CD8-positive, alpha-beta memory T cell (primary cell): ENCODE measurements at regions of chr6 and their contacts with region 1.

Region 1: GRCh38 chr6:135145063-135145800 is 35.9 kb upstream of the MYB start:
- DNase-seq: peak in 3 of 5 donors; percentile 17 to 49 (median 43)
- H3K4me3 ChIP-seq: no peak overlapping the region
- H3K4me3 Mint-ChIP-seq: peak overlapping the region; percentile 37 to 74 (median 59)
- H3K27ac ChIP-seq: no peak overlapping the region
- H3K27ac Mint-ChIP-seq: peak overlapping the region in 7 of 8 donors; percentile 31 to 92 (median 66)
- H3K4me1 ChIP-seq: peaks cover 11% of the 10 kb centered on the region
- H3K4me1 Mint-ChIP-seq: peaks cover 14 to 31% (median 30%) of the 10 kb centered on the region in 3 donors
- H3K27me3 ChIP-seq: no peaks in the 10 kb centered on the region
- H3K27me3 Mint-ChIP-seq: no peaks in the 10 kb centered on the region

Region 2: GRCh38 chr6:134826889-134827737 is 318.1 kb before region 1 on chr6:
- CTCF ChIA-PET with region 1: no interaction called
- POLR2A ChIA-PET with region 1: no interaction called
- DNase-seq: no peak
- H3K4me3 ChIP-seq: no peak overlapping the region
- H3K4me3 Mint-ChIP-seq: no peak overlapping the region
- H3K27ac ChIP-seq: no peak overlapping the region
- H3K27ac Mint-ChIP-seq: no peak overlapping the region
- H3K4me1 ChIP-seq: no peaks in the 10 kb centered on the region
- H3K4me1 Mint-ChIP-seq: peaks cover 0 to 3% (median 3%) of the 10 kb centered on the region in 3 donors
- H3K27me3 ChIP-seq: no peaks in the 10 kb centered on the region
- H3K27me3 Mint-ChIP-seq: peaks cover 3 to 13% of the 10 kb centered on the region in 2 donors

Region 3: GRCh38 chr6:135423649-135424128 is 278.5 kb after region 1 on chr6:
- CTCF ChIA-PET with region 1: interaction called, 10 read pairs
- POLR2A ChIA-PET with region 1: no interaction called
- DNase-seq: peak in 2 of 5 donors; percentile 5 to 9
- H3K4me3 ChIP-seq: no peak overlapping the region
- H3K4me3 Mint-ChIP-seq: no peak overlapping the region
- H3K27ac ChIP-seq: no peak overlapping the region
- H3K27ac Mint-ChIP-seq: no peak overlapping the region
- H3K4me1 ChIP-seq: no peaks in the 10 kb centered on the region
- H3K4me1 Mint-ChIP-seq: no peaks in the 10 kb centered on the region
- H3K27me3 ChIP-seq: no peaks in the 10 kb centered on the region
- H3K27me3 Mint-ChIP-seq: no peaks in the 10 kb centered on the region